ENCODE measurements at regions of chr4 and their contacts with region 1.

Region 1: DNA sequence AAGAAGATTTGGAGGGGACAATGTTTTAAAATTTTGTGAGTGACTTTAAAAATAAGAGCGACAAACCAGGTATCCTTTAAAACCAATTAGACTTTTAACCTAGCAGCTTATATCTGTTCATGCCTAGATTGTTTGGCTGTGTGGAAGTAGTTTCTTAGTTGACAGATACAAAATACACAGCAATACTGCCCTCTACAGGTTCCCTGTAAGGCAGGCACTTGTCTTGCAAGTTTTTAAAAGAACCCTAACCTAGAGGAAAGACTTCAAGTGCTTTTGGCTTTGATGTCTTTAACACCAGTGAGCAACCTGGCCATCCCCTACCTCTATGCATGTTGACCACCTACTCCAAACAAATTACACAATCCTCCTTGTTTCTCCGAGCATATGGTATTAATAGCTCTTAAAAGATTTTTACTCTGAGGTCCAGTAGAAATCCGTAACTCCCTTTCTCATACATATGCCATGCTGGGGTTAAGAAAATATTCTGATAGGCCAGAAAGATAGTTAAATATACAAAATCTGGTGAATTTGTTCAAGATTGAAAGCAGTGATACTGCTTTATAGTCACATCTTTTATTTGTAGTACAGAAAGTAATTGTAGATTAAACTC is 273.0 kb downstream of the ARHGAP24 start:
- DNase-seq: peak; percentile 43
- H3K4me3 ChIP-seq: no peak overlapping the region
- H3K27ac ChIP-seq: no peak overlapping the region
- H3K4me1 ChIP-seq: no peaks in the 10 kb centered on the region
- H3K27me3 ChIP-seq: no peaks in the 10 kb centered on the region
- CTCF ChIP-seq: peak; percentile 69

Region 2: GRCh38 chr4:85147439-85148076 is 600.4 kb before region 1 on chr4:
- intact Hi-C with region 1: loop called (anchors 5 kb)
- DNase-seq: peak; percentile 29
- H3K4me3 ChIP-seq: no peak overlapping the region
- H3K27ac ChIP-seq: no peak overlapping the region
- H3K4me1 ChIP-seq: no peaks in the 10 kb centered on the region
- H3K27me3 ChIP-seq: no peaks in the 10 kb centered on the region
- CTCF ChIP-seq: peak; percentile 59

Region 3: DNA sequence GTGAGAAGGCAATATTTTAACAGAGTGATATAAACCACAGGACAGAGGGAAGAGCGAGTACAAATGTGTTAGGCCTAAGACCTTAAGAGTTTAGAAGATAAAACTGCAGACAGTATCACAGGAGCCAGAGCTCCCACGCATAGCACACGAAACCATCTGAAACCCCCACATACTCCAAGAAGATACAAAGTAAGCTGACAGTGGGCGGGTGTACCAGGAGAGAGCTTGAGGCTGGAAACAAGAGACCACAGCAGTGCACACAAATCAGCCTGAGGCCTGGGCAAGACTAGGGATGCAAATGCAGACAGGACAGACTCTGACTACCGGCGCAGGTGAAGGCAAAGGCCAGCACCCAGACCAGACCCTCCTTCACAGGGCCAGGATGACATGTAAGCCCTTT is 327.2 kb before region 1 on chr4:
- intact Hi-C with region 1: loop called (anchors 2 kb)
- DNase-seq: no peak
- H3K4me3 ChIP-seq: no peak overlapping the region
- H3K27ac ChIP-seq: no peak overlapping the region
- H3K4me1 ChIP-seq: no peaks in the 10 kb centered on the region
- H3K27me3 ChIP-seq: no peaks in the 10 kb centered on the region
- CTCF ChIP-seq: no peak

Region 4: GRCh38 chr4:85489273-85490265 is 258.4 kb before region 1 on chr4:
- intact Hi-C with region 1: no loop called
- DNase-seq: no peak
- H3K4me3 ChIP-seq: no peak overlapping the region
- H3K27ac ChIP-seq: no peak overlapping the region
- H3K4me1 ChIP-seq: no peaks in the 10 kb centered on the region
- H3K27me3 ChIP-seq: no peaks in the 10 kb centered on the region
- CTCF ChIP-seq: no peak

Region 5: GRCh38 chr4:85938062-85938461 is 190.1 kb after region 1 on chr4:
- intact Hi-C with region 1: no loop called
- DNase-seq: peak; percentile 24
- H3K4me3 ChIP-seq: no peak overlapping the region
- H3K27ac ChIP-seq: no peak overlapping the region
- H3K4me1 ChIP-seq: no peaks in the 10 kb centered on the region
- H3K27me3 ChIP-seq: no peaks in the 10 kb centered on the region
- CTCF ChIP-seq: no peak

Measured in colonic mucosa (tissue), 4 donors.